ENCODE measurements at regions of chr1 and their contacts with region 1.

Region 1: GRCh38 chr1:198088360-198089071 is 68.3 kb upstream of the NEK7 start:
- DNase-seq: no peak

Region 2: GRCh38 chr1:198359024-198359653 is 270.6 kb after region 1 on chr1:
- intact Hi-C with region 1: loop called in 1 of 2 experiments (anchors 10 kb)
- DNase-seq: no peak

Measured in posterior vena cava (tissue), 2 donors.